A673 (cell line): ENCODE measurements at regions of chr11 and their contacts with region 1.

Region 1: DNA sequence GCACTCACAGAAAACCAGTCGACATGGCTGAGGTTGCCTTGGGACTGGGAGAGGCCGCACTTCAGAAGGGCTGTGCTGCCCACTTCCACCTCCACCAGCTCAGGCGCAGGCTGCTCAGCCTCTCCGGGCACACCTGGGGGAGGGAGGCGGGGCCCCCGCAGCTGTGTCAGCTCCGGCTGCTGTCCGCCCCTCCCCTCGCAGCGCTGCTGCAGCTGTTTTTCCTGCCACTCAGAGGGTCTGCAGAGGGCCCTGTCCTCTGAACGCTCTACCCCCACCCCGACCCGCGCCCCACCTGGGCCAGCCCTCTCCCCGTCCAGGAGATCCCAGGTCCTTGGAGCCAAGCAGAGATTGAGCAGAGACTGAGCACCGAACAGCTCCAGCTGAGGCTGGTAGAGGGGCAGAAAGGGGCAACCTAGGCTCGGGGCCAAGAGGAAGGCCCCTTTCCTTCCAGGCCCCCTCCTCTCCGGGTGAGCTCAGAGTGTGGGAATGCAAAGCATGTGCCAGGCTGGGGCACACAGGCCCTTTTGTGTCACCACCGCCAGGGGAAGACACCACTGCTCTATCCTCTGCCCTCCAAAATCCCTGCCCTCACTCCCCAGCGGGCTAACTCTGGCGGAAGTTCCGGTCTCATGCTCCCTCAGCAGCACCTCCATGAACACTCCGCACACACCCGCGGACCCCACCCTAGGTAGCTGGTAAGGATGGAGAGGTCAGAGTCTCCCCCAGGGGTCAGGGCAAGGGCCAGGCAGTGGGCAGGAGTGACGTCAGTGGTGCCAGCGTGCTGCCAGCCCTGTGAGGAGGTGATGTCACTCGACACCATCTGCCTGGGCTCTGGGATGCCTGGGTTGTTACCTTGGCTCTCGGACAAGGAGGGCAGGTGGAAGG is 1.6 kb downstream of the MCAM start:
- DNase-seq: peak; percentile 56
- H3K4me3 ChIP-seq: peak overlapping the region; percentile 62
- H3K27ac ChIP-seq: no peak overlapping the region
- H3K4me1 ChIP-seq: peaks cover 14% of the 10 kb centered on the region
- H3K27me3 ChIP-seq: no peaks in the 10 kb centered on the region
- CTCF ChIP-seq: no peak

Region 2: GRCh38 chr11:119403021-119403420 is 87.6 kb after region 1 on chr11:
- CTCF ChIA-PET with region 1: interaction called, 10 read pairs
- POLR2A ChIA-PET with region 1: no interaction called
- intact Hi-C with region 1: no loop called
- DNase-seq: no peak
- H3K4me3 ChIP-seq: no peak overlapping the region
- H3K27ac ChIP-seq: no peak overlapping the region
- H3K4me1 ChIP-seq: no peaks in the 10 kb centered on the region
- H3K27me3 ChIP-seq: no peaks in the 10 kb centered on the region
- CTCF ChIP-seq: no peak

Region 3: DNA sequence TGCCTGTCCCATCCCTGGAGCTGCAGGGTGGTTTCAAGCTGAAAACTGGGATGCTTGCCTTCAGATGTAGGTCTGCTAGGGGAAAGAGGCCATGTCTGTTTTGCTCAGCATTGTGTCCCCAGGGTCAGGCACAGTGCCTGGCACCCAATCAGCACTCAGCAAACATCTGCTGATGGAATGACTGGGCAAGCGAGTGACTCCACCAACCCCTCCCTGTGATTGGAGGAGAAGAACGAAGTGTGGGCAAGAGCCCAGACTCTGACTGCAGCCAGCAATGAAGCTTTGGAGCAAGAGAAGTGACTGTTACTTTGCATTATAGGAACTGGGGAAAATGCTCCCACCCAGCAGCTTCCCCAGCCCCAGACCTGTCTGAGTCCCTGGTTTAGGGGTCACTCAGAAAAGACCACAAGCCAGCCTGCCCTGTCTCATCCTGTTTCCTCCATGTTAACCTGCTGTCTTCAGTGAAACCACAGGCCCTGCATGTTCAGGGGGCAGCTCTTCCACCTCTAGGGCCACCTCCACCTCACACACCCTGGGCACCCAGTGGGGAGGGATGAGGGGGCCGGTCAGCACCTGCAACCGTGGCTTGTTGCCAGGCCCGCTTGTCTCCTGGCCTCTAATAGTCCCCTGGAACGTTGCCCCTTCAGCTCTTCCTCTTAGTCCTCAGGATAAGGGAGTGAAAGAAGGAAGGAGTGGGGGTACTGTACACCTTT is 675.1 kb after region 1 on chr11:
- CTCF ChIA-PET with region 1: no interaction called
- POLR2A ChIA-PET with region 1: no interaction called
- intact Hi-C with region 1: no loop called
- DNase-seq: no peak
- H3K4me3 ChIP-seq: no peak overlapping the region
- H3K27ac ChIP-seq: no peak overlapping the region
- H3K4me1 ChIP-seq: no peaks in the 10 kb centered on the region
- H3K27me3 ChIP-seq: peaks cover 21% of the 10 kb centered on the region
- CTCF ChIP-seq: no peak